ENCODE measurements at regions of chr7 and their contacts with region 1.

Region 1: DNA sequence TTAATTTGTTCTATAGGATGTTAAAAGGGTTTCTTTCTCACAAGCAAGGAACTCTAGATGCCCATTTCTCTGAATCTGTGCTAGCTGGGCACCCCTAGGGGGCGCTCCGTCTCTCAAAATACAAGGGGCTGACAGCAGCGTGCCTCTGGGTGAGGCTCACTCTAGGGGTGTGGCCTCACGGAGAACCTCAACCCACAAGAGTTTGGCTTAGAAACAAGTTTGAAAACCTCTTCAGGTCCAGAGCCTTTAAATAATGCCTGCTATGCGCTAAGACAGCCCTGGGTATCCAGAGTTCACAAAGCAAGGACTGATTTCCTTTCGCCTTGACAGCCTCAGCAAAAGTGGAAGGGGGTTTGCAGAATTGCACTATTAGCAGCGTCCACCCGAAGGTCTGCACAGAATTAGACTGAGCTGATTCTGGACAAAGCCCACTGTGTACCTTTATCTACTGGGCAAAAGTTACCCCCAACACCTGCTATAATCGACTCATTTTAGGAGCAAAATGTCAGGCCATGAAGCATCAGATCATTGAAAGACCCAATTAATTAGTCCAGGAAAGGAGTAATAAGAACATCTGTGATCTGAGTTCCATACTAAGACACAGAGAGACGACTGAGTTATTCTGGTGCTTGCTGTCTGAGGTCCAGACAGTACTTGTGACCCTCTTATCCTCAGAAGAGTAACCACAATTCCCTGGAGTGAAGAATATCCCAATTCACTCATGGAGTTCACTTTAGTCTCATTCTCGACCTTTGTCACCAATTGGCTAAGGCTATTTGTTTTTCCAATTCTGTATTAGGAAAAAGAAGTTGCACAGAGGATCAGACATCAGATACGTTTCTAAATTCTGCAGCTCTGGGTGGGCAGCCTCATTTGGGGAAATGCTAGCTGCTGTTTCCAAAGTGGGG is 574 bp upstream of the CPED1 start:
- DNase-seq: peak; percentile 77
- H3K4me3 Mint-ChIP-seq: peak overlapping the region; percentile 81
- H3K27ac Mint-ChIP-seq: no peak overlapping the region
- H3K4me1 Mint-ChIP-seq: peaks cover 20% of the 10 kb centered on the region
- H3K27me3 Mint-ChIP-seq: peaks cover 53% of the 10 kb centered on the region

Region 2: GRCh38 chr7:121081327-121081936 is 93.5 kb after region 1 on chr7:
- intact Hi-C with region 1: loop called (anchors 1 kb)
- DNase-seq: no peak
- H3K4me3 Mint-ChIP-seq: no peak overlapping the region
- H3K27ac Mint-ChIP-seq: no peak overlapping the region
- H3K4me1 Mint-ChIP-seq: no peaks in the 10 kb centered on the region
- H3K27me3 Mint-ChIP-seq: peaks cover 13% of the 10 kb centered on the region

Region 3: DNA sequence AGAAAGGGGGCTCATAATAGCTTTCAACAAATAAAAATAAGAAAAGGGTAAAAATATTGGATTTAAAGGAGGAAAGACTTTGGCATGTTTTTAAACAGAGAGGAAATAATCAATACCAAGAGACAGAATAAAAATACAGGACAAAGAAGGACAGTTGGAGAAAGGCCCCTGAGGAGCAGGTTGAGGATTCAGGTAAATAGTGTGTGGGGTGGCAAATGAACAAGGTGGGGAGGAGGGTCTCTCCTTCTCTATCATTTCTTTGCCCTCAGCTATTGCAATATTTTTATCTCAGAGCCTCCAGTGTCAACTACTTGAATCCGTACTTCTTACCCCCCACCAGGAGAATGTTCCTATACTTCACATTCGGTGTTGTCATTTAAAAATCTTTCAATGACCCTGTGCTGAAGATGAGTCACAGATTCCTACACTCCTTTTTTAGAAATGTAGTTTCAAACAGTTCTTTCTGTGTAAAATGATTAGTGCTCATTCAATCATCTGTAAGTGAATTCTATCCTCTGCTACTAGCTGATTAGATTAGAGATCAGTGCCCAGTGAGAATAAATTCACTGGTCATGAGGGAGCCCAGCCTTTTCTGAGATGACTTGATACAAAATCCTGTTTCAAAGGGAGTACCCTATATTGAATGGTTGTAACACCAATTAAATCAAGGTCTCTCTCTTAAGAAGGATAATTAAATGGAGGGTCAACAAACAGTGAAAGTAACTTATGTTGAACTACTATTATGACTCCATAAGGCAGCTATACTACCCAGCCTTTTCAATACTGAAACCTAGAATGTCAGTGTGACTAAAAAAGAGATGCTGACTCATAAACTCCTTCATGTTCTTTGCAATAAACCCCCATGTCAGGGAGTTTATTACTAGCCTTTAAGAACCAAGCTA is 290.4 kb after region 1 on chr7:
- intact Hi-C with region 1: loop called (anchors 2 kb)
- DNase-seq: no peak
- H3K4me3 Mint-ChIP-seq: no peak overlapping the region
- H3K27ac Mint-ChIP-seq: no peak overlapping the region
- H3K4me1 Mint-ChIP-seq: peaks cover 18% of the 10 kb centered on the region
- H3K27me3 Mint-ChIP-seq: peaks cover 8% of the 10 kb centered on the region

Region 4: GRCh38 chr7:121366852-121367431 is 379.0 kb after region 1 on chr7:
- intact Hi-C with region 1: loop called (anchors 10 kb)
- DNase-seq: no peak
- H3K4me3 Mint-ChIP-seq: peak overlapping the region; percentile 62
- H3K27ac Mint-ChIP-seq: no peak overlapping the region
- H3K4me1 Mint-ChIP-seq: peaks cover 53% of the 10 kb centered on the region
- H3K27me3 Mint-ChIP-seq: no peaks in the 10 kb centered on the region